Activated CD4-positive, alpha-beta T cell treated with anti-CD3 and anti-CD28 coated beads, Interleukin-2, amount 10 ng/mL, durations not matched to agents 24 days and 14 days (primary cell): ENCODE measurements at regions of chr12 and their contacts with region 1.

Region 1: DNA sequence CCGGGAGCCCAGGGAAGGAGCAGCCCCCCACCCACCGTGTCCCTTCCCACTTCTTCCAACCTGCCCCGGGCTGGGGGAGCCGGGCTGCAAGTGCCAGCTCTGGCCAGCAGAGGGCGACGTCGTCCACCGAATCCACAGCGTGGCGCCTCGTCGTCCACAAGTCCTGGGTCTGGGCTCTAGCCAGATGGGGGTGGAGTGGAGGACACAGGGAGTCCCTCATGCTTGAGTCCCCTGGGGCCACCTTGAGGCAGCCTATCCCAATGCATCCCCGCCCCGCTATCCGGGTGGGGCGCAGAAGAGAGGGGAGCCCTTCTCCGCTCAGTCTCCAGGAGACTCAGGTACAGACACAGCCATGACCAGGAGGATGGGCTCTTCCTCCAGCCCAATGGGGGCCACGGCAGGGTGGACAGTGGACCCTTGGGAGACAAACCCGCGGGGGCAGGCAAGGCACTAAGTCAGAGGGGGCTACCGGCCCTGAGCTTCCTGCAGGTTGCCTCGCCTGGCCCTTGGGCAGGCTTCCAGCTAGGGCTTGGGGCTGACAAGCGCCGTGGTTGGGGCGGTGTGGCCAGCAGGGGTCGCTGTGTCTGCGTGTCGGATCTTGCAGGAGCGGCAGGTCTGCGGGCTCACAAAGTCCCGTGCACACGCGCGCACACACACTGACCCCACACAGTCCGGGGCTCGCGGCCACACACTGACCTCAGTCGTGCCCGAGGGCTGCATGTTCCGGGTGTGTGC is 5.5 kb downstream of the AQP5 start:
- DNase-seq: peak; percentile 98
- H3K4me3 Mint-ChIP-seq: peak overlapping the region; percentile 73
- H3K27ac Mint-ChIP-seq: peak overlapping the region; percentile 20
- H3K4me1 Mint-ChIP-seq: peaks cover 4% of the 10 kb centered on the region
- H3K27me3 Mint-ChIP-seq: peaks cover 40% of the 10 kb centered on the region

Region 2: GRCh38 chr12:49866859-49867579 is 100.2 kb before region 1 on chr12:
- intact Hi-C with region 1: loop called (anchors 2 kb)
- DNase-seq: peak; percentile 92
- H3K4me3 Mint-ChIP-seq: no peak overlapping the region
- H3K27ac Mint-ChIP-seq: no peak overlapping the region
- H3K4me1 Mint-ChIP-seq: no peaks in the 10 kb centered on the region
- H3K27me3 Mint-ChIP-seq: peaks cover 5% of the 10 kb centered on the region

Region 3: DNA sequence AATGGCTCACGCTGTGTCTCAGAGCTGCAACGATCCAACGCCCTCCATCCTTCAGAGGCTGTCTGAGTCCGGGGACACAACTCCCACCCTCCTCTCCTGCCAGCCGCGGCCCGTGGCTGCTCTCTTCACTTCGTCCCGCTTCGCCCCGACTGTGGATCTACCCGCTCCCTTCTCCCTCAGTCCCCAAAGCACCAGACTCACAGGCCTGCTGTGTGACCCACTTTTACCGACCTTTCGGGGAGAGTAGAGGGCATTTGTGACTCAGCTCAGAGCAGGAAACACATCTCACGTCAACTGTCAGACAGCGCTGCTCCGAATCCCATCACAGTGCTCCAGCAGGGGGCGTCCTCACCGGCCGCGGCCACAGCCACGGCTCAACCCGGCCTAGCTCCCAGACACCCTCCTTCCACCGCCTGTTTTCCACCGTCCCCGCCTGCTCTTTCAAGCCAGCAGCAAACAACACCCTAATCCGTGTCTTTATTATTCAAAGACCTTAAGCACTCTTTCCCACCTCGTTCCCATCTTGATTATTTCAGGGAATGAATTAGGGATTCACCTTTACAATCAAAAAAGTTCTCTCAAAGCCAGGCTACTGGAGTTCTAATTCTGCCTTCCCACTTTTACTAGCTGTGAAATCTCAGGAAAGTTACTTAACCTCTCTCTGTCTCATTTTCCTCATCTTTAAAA is 21.7 kb before region 1 on chr12:
- intact Hi-C with region 1: no loop called
- DNase-seq: peak; percentile 94
- H3K4me3 Mint-ChIP-seq: peak overlapping the region; percentile 80
- H3K27ac Mint-ChIP-seq: peak overlapping the region; percentile 94
- H3K4me1 Mint-ChIP-seq: peaks cover 20% of the 10 kb centered on the region
- H3K27me3 Mint-ChIP-seq: peaks cover 6% of the 10 kb centered on the region

Region 4: DNA sequence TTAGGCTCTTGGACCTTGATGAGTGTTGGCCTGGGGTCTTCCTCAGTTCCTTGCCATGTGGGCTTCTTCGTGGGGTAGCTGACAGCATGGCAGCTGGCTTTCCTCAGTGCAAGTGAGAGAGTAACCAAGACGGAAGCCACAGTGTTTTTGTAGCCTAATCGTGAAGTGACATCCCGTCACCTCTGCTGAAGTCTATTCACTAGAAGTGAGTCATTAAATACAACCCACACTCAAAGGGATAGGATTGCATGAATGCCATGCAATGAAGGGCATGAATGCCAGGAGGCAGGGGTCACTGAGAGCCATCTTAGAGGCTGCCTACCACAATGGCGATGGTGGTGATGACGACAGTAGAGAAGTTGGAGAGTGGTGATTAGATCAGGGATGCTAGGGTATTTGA is 76.6 kb after region 1 on chr12:
- intact Hi-C with region 1: loop called (anchors 1 kb)
- DNase-seq: no peak
- H3K4me3 Mint-ChIP-seq: peak overlapping the region; percentile 16
- H3K27ac Mint-ChIP-seq: peak overlapping the region; percentile 46
- H3K4me1 Mint-ChIP-seq: peaks cover 35% of the 10 kb centered on the region
- H3K27me3 Mint-ChIP-seq: peaks cover 15% of the 10 kb centered on the region

Region 5: GRCh38 chr12:50055831-50056638 is 88.8 kb after region 1 on chr12:
- intact Hi-C with region 1: loop called (anchors 1 kb)
- DNase-seq: peak; percentile 89
- H3K4me3 Mint-ChIP-seq: peak overlapping the region; percentile 90
- H3K27ac Mint-ChIP-seq: peak overlapping the region; percentile 66
- H3K4me1 Mint-ChIP-seq: peaks cover 37% of the 10 kb centered on the region
- H3K27me3 Mint-ChIP-seq: peaks cover 40% of the 10 kb centered on the region

Region 6: GRCh38 chr12:50074936-50075807 is 108.0 kb after region 1 on chr12:
- intact Hi-C with region 1: loop called (anchors 1 kb)
- DNase-seq: peak; percentile 94
- H3K4me3 Mint-ChIP-seq: no peak overlapping the region
- H3K27ac Mint-ChIP-seq: peak overlapping the region; percentile 41
- H3K4me1 Mint-ChIP-seq: peaks cover 13% of the 10 kb centered on the region
- H3K27me3 Mint-ChIP-seq: no peaks in the 10 kb centered on the region